Right ventricle myocardium inferior (tissue), 1 donor: ENCODE measurements at regions of chr4 and their contacts with region 1.

Region 1: GRCh38 chr4:9762823-9763475 is 18.5 kb upstream of the DRD5 start:
- DNase-seq: no peak
- ATAC-seq: no peak

Region 2: DNA sequence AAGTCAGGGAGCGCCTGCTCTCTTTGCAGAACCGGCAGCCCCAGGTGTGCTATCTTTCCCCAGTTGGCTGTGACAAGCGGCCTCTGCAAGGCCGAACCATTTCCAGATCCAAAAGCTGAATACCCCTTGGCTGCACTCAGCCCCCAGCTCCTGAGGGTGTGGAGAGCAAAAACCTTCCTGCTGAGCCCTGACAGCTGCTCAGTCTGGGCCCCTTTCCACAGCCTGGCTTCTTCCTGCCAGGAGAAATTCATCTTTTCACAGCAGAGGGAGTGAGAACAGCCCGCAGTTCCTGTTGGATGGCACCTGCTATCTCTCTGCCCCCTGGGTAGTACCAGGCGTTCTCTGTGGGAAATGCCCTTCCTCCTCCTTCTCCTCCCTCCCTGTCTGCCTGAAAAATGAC is 96.9 kb after region 1 on chr4:
- intact Hi-C with region 1: no loop called
- DNase-seq: no peak
- ATAC-seq: no peak

Region 3: GRCh38 chr4:9898596-9899305 is 135.8 kb after region 1 on chr4:
- intact Hi-C with region 1: loop called (anchors 2 kb)
- DNase-seq: no peak
- ATAC-seq: peak; percentile 85

Region 4: GRCh38 chr4:10013722-10014121 is 250.8 kb after region 1 on chr4:
- intact Hi-C with region 1: loop called (anchors 1 kb)
- DNase-seq: no peak
- ATAC-seq: peak; percentile 47

Region 5: DNA sequence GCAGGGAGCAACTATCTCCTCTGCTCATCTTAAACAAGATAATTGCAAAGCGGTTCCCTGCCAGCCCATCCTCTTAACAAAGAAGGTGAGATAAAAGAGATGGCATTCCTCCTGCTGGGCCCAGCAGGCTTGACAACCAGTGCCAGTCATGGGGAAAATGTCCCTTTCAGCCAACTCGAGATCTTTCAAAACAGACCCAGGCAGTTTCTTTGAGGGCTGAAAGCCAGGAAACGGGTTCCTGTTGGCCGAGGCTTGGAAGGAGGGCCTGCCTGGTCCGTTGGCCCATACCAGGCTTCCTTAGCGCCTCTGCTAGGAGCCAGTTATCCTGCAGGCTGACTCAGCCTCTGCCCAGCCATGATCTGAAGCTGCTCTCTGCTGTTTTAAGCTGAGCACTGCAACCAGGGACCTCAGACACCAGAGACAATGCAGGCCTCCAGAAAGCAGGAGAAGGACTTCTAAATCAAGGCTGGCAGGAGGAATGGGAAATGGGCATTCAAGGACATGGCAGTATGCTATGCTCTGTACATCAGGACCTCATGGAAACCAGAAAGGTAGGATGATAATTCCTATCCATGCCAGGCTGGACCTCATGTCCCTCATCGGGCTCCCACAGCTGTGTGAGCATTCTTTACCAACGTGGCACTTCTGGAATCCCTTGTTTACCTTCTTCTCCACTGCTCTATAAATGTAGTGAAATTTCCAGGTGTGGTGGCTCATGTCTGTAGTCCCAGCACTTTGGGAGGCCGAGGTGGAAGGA is 300.8 kb after region 1 on chr4:
- intact Hi-C with region 1: loop called (anchors 5 kb)
- DNase-seq: no peak
- ATAC-seq: peak; percentile 93